GM10248 (cell line): ENCODE measurements at regions of chr2 and their contacts with region 1.

Region 1: GRCh38 chr2:27303093-27304025 is 4.9 kb downstream of the UCN start:
- DNase-seq: peak; percentile 70
- CTCF ChIP-seq: peak; percentile 77

Region 2: GRCh38 chr2:26959331-26959730 is 344.0 kb before region 1 on chr2:
- CTCF ChIA-PET with region 1: interaction called, 45 read pairs
- POLR2A ChIA-PET with region 1: no interaction called
- DNase-seq: no peak
- CTCF ChIP-seq: no peak

Region 3: DNA sequence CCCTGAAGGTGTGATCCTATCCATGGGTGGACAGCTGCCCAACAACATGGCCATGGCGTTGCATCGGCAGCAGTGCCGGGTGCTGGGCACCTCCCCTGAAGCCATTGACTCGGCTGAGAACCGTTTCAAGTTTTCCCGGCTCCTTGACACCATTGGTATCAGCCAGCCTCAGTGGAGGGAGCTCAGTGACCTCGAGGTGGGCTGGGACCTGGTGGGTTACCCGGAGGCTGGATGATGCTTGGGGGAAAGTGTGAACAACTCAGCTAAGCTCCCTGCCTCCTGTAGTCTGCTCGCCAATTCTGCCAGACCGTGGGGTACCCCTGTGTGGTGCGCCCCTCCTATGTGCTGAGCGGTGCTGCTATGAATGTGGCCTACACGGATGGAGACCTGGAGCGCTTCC is 70.0 kb before region 1 on chr2:
- CTCF ChIA-PET with region 1: interaction called, 23 read pairs
- POLR2A ChIA-PET with region 1: no interaction called
- DNase-seq: no peak
- CTCF ChIP-seq: no peak

Region 4: GRCh38 chr2:27264753-27265535 is 38.4 kb before region 1 on chr2:
- CTCF ChIA-PET with region 1: interaction called, 23 read pairs
- POLR2A ChIA-PET with region 1: no interaction called
- DNase-seq: peak; percentile 80
- CTCF ChIP-seq: peak; percentile 61

Region 5: DNA sequence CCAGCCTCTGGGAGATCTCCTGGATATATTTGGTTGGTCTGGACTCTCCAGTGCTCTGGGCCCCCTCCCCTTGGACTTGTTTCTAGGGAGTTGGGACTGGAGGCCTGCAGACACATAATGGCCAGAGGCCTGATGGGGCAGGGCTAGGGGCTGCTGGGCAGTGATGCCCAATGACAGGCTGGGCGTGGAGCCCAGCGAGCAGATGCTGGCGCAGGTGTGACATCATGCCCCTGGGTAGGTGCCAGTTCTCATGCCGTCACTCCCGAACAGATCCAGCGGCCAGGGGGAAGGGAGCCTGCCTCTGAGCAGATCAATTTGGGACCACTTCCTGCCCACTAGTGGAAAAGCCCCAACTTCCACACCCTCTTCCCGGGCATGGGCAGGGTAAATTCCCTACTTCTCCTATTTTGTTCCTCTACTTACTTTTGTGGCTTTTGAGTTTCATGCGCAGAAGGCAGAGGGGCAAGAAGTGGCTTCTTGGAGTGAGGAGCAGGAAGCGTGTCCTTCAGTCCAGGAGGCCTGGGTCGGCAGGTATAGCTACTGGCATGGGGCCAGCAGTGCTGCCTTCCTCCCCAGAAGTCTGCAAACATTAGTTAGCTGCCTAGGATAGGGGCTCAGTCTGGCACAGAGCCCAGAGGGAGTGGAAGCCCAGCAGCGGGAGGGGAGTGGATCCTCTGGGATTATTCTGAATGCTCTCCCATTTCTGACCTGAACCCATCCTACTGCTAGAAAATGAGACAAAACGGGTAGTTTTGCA is 13.5 kb after region 1 on chr2:
- CTCF ChIA-PET with region 1: interaction called, 33 read pairs
- POLR2A ChIA-PET with region 1: no interaction called
- DNase-seq: no peak
- CTCF ChIP-seq: no peak

Region 6: DNA sequence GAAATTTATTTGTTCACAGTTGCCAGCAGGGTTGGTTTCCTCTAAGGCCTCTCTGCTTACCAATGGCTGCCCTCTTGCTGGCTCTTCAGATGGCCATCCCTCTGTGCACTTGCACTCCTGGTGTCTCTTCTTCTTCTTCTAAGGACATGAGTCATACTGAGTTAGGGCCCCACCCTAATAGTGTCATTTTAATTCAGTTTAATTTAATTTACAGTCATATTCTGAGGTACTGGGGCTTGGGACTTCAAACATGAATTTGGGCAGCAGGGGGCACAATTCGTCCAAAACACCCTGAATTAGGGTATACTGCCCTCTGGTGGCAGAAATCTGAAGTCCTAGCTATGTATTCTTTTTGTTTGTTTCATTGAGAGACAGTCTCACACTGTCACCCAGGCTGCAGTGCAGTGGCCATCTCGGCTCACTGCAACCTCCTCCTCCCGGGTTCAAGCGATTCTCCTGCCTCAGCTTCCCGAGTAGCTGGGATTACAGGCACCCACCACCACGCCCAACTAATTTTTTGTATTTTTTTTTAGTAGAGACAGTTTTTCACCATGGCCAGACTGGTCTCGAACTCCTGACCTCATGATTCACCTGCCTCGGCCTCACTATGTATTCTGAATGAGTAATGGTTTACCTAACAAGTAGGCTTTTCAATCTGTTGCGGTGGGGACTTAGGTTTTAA is 380.2 kb after region 1 on chr2:
- CTCF ChIA-PET with region 1: interaction called, 11 read pairs
- POLR2A ChIA-PET with region 1: no interaction called
- DNase-seq: peak; percentile 76
- CTCF ChIP-seq: peak; percentile 99